IMR-90 (cell line): ENCODE measurements at regions of chr12 and their contacts with region 1.

Region 1: GRCh38 chr12:120292661-120293531 is at the start of gene RNU4-1:
- DNase-seq: peak; percentile 97
- ATAC-seq: peak; percentile 53
- H3K4me3 ChIP-seq: peak within 1 kb of the TSS; percentile 56
- H3K27ac ChIP-seq: peak within 1 kb of the TSS; percentile 93
- H3K4me1 ChIP-seq: 0 out of 2 replicates have a peak, but pooled peaks cover 5% of the 10 kb centered on the region
- H3K27me3 ChIP-seq: no peaks in the 10 kb centered on the region
- CTCF ChIP-seq: no peak
- POLR2A ChIP-seq: peak; percentile 100
- RAD21 ChIP-seq: no peak
- total RNA-seq, gene RNU4-1: under 0.01 TPM in 2 replicates

Region 2: GRCh38 chr12:119876761-119877638 is 415.9 kb before region 1 on chr12 and contains the start of gene CIT:
- CTCF ChIA-PET with region 1: no interaction called
- POLR2A ChIA-PET with region 1: no interaction called
- dilution Hi-C with region 1: no loop called
- in situ Hi-C with region 1: no loop called
- intact Hi-C with region 1: no loop called
- DNase-seq: peak; percentile 93
- ATAC-seq: peak; percentile 100
- H3K4me3 ChIP-seq: peak within 1 kb of the TSS; percentile 60
- H3K27ac ChIP-seq: peak within 1 kb of the TSS; percentile 27; the same call in 1 of the 2 replicates
- H3K4me1 ChIP-seq: no peaks in the 10 kb centered on the region
- H3K27me3 ChIP-seq: no peaks in the 10 kb centered on the region
- CTCF ChIP-seq: no peak
- POLR2A ChIP-seq: no peak
- RAD21 ChIP-seq: no peak
- total RNA-seq, gene CIT: 21.0 and 23.1 TPM in 2 replicates

Region 3: GRCh38 chr12:120019938-120020337 is 273.0 kb before region 1 on chr12:
- CTCF ChIA-PET with region 1: no interaction called
- POLR2A ChIA-PET with region 1: no interaction called
- dilution Hi-C with region 1: no loop called
- in situ Hi-C with region 1: no loop called
- intact Hi-C with region 1: no loop called
- DNase-seq: no peak
- ATAC-seq: no peak
- H3K4me3 ChIP-seq: no peak overlapping the region
- H3K27ac ChIP-seq: no peak overlapping the region
- H3K4me1 ChIP-seq: no peaks in the 10 kb centered on the region
- H3K27me3 ChIP-seq: peaks cover 4% of the 10 kb centered on the region; the same call in 1 of the 2 replicates
- CTCF ChIP-seq: no peak
- POLR2A ChIP-seq: no peak
- RAD21 ChIP-seq: no peak

Region 4: DNA sequence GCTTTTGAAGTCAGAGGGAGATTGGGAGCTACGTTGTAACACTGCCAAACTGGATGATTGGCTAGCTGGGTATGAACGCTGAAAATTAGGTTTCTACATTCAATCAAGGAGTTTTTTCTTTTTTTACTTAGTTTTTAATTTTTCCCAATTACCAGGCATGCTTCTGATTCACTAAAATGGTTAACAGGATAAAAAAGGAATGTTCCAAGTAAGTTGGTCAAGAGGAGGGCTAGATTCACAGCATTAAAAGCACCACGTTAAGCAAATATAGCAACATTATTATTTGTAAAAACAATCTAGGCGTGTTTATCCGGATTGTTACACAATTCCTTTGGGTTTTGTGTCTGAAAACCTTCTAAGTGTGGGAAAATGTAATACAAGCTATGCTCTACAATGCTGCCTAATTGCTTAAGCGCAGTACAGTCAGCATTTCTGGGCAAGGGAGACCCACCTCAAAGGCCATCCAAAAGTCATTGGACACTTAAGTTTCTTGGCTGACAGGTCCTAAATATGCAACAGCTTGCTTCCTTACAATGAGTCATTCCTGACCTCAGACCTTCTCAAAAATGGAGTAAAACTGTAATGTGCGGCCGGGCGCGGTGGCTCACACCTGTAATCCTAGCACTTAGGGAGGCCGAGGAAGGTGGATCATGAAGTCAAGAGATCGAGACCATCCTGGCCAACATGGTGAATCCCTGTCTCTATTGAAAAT is 93.1 kb before region 1 on chr12:
- CTCF ChIA-PET with region 1: interaction called, 3 read pairs
- POLR2A ChIA-PET with region 1: interaction called, 45 read pairs
- dilution Hi-C with region 1: no loop called
- in situ Hi-C with region 1: no loop called
- intact Hi-C with region 1: no loop called
- DNase-seq: peak; percentile 77
- ATAC-seq: no peak
- H3K4me3 ChIP-seq: peak overlapping the region; percentile 57
- H3K27ac ChIP-seq: peak overlapping the region; percentile 57
- H3K4me1 ChIP-seq: peaks cover 8% of the 10 kb centered on the region
- H3K27me3 ChIP-seq: no peaks in the 10 kb centered on the region
- CTCF ChIP-seq: no peak
- POLR2A ChIP-seq: peak; percentile 52; the same call in 1 of the 2 replicates
- RAD21 ChIP-seq: no peak

Region 5: GRCh38 chr12:120242275-120242799 is 50.6 kb before region 1 on chr12:
- CTCF ChIA-PET with region 1: interaction called, 3 read pairs
- POLR2A ChIA-PET with region 1: interaction called, 26 read pairs
- dilution Hi-C with region 1: no loop called
- in situ Hi-C with region 1: no loop called
- intact Hi-C with region 1: no loop called
- DNase-seq: no peak
- ATAC-seq: no peak
- H3K4me3 ChIP-seq: no peak overlapping the region
- H3K27ac ChIP-seq: no peak overlapping the region
- H3K4me1 ChIP-seq: peaks cover 41% of the 10 kb centered on the region
- H3K27me3 ChIP-seq: no peaks in the 10 kb centered on the region
- CTCF ChIP-seq: no peak
- POLR2A ChIP-seq: no peak
- RAD21 ChIP-seq: no peak

Region 6: DNA sequence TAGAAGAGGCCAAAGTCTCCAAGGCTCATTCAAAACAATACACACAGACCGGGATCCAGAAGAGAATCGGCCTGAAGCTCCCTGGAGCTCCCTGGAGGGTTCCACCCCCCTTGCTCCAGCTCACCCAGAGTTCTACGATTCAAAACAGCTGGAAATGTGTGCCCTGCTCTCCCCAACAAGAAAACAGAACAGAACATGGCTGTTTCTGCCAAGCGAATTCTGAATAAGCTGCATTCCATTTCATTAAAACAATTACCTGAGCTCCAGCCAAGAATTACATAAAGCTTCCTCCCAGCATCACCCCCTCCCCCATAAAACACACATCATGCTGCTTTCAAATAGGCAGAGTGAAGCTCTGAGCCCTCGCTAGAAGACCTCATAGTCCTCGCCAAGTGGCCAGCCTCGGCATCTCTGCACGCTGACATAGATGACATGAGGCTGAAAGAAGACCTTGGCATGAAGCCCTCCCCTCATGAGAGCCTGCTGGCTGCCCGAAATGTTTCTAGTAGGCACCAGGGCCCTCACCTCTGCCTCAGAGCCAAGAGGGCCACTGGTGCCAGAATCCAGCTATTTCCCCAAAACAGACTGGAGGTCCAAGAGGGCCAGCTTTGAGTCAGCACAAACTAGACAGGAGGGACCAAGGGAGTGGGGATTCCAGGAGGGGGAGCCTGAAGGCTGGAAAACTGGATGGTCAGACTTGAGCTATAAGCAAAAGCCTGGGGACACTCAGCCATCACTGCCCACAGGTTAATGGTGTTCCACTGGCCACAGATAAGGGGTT is 35.7 kb before region 1 on chr12:
- CTCF ChIA-PET with region 1: no interaction called
- POLR2A ChIA-PET with region 1: interaction called, 13 read pairs
- dilution Hi-C with region 1: no loop called
- in situ Hi-C with region 1: no loop called
- intact Hi-C with region 1: no loop called
- DNase-seq: peak; percentile 93
- ATAC-seq: peak; percentile 83
- H3K4me3 ChIP-seq: no peak overlapping the region
- H3K27ac ChIP-seq: peak overlapping the region; percentile 70
- H3K4me1 ChIP-seq: peaks cover 28% of the 10 kb centered on the region
- H3K27me3 ChIP-seq: no peaks in the 10 kb centered on the region
- CTCF ChIP-seq: no peak
- POLR2A ChIP-seq: no peak
- RAD21 ChIP-seq: no peak

Region 7: GRCh38 chr12:121005346-121005815 is 712.5 kb after region 1 on chr12:
- CTCF ChIA-PET with region 1: no interaction called
- POLR2A ChIA-PET with region 1: interaction called, 21 read pairs
- dilution Hi-C with region 1: no loop called
- in situ Hi-C with region 1: no loop called
- intact Hi-C with region 1: no loop called
- DNase-seq: peak; percentile 23
- ATAC-seq: peak; percentile 79
- H3K4me3 ChIP-seq: no peak overlapping the region
- H3K27ac ChIP-seq: no peak overlapping the region
- H3K4me1 ChIP-seq: no peaks in the 10 kb centered on the region
- H3K27me3 ChIP-seq: no peaks in the 10 kb centered on the region
- CTCF ChIP-seq: peak; percentile 61
- POLR2A ChIP-seq: no peak
- RAD21 ChIP-seq: peak; percentile 58